Mammary epithelial cell (primary cell): ENCODE measurements at regions of chr3 and their contacts with region 1.

Region 1: GRCh38 chr3:149902498-149903139 is 68.1 kb downstream of the PFN2 start:
- DNase-seq: peak; percentile 1
- H3K4me3 ChIP-seq: no peak overlapping the region
- H3K27ac ChIP-seq: no peak overlapping the region
- H3K4me1 ChIP-seq: no peaks in the 10 kb centered on the region
- H3K27me3 ChIP-seq: no peaks in the 10 kb centered on the region
- CTCF ChIP-seq: peak; percentile 24 to 37

Region 2: DNA sequence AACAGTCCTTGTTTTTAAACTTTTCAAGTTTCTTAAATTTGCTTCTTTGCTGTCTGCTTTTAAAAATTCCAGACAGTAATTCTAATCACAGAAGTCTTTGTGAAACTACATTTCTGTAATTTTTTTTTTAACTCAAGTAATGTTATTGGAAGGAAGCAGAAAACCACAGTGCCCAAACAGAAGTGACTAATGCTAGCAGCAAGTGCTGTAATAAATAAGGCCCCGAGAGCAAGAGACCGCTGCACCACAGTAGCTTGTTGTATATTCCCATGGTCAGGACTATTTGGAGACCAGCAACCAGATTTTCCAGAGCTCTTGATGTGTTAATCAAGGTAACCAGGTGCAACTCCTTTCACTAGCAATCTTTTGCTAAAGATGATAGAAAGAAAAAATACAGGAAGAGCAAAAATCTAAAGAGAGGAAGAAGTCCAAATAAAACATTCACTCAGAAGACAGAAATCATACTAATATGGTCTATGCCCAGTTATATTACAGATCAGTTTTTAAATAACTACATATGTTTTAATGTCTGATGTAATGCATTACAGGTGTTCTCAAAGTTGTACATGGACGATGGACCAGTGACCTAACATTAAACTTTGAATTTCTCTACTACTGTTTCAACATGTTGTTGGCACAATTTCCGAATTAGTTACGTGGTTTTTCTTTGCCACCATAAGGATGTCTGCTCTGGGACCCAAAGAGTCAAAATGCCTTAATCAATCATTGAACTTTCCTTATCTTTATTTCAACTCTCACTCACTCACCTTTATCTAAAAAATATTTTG is 281.2 kb before region 1 on chr3:
- CTCF ChIA-PET with region 1: no interaction called
- dilution Hi-C with region 1: no loop called
- in situ Hi-C with region 1: no loop called
- intact Hi-C with region 1: no loop called
- DNase-seq: peak; percentile 86
- H3K4me3 ChIP-seq: no peak overlapping the region
- H3K27ac ChIP-seq: peak overlapping the region; percentile 46
- H3K4me1 ChIP-seq: peaks cover 51% of the 10 kb centered on the region
- H3K27me3 ChIP-seq: no peaks in the 10 kb centered on the region
- CTCF ChIP-seq: no peak

Region 3: DNA sequence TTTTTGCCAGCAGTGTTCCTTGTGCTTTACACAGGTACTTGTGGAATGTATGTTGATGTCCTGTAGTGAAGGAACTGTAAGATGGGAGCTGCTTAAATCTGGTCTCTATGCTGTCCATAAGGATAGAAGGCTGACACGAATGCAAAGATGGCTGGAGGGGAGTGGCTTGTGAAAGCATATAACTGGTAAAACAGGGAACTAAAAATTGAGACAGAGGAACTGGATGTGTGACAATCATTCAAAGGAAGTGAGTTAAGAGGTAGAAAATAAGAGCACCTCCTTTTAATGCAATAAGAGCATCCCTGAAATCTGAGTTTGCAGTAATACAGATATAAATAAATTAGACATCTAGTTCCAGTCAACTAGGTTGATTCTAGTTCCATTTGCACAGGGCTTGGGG is 54.4 kb before region 1 on chr3:
- CTCF ChIA-PET with region 1: no interaction called
- dilution Hi-C with region 1: loop called (anchors 5 kb)
- in situ Hi-C with region 1: no loop called
- intact Hi-C with region 1: no loop called
- DNase-seq: no peak
- H3K4me3 ChIP-seq: no peak overlapping the region
- H3K27ac ChIP-seq: no peak overlapping the region
- H3K4me1 ChIP-seq: no peaks in the 10 kb centered on the region
- H3K27me3 ChIP-seq: no peaks in the 10 kb centered on the region
- CTCF ChIP-seq: no peak